H1 (cell line): ENCODE measurements at regions of chr3 and their contacts with region 1.

Region 1: DNA sequence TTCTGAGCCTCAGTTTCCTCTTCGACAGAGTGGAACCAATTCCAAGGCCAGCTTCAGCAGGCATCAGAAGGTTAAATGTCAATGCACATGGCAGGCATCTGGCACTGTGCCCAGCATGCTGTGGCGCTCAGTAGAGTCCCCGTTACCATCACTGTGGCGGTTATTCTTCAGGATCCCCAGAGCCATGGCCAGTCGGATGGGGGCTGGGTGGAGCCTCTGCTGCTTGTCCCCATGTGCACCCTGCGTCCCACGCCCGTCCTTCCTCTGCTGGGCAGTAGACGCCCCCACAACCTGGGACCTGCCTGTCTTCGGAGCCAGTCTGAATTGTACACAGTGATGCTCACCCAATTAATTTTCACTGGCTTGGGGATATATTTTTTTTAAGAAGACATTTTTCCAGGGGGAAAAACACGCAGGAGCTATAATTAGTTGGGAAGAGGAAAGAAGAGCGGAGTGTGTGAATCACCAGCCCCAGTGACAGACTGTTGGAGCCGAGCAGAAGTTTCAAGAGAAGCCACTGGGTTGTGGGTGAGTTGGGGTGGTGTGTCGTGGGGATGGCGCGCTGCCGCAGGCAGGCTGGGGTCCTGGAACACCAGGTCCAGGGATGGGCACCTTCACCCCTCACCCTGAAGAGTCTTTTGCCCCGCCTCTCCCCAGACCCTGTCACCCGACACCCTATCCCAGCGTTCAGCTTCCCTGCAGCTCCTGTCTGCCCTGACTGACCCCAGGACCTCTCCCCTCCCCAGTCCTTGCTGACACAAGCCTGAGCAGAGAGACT is 26.8 kb upstream of the RPL29 start:
- DNase-seq: no peak
- H3K4me3 ChIP-seq: no peak overlapping the region
- H3K27ac ChIP-seq: no peak overlapping the region
- H3K4me1 ChIP-seq: peaks cover 0 to 5% (median 2%) of the 10 kb centered on the region in 4 experiments; a peak in 3 of 7 replicates
- H3K27me3 ChIP-seq: no peaks in the 10 kb centered on the region
- CTCF ChIP-seq: no peak
- EP300 ChIP-seq: no peak
- POLR2A ChIP-seq: no peak
- RAD21 ChIP-seq: no peak

Region 2: GRCh38 chr3:52046186-52046913 is 23.8 kb after region 1 on chr3:
- CTCF ChIA-PET with region 1: interaction called, 984 read pairs
- POLR2A ChIA-PET with region 1: interaction called, 4 read pairs
- DNase-seq: no peak
- H3K4me3 ChIP-seq: no peak overlapping the region
- H3K27ac ChIP-seq: no peak overlapping the region
- H3K4me1 ChIP-seq: peaks cover 0 to 8% (median 3%) of the 10 kb centered on the region in 4 experiments; a peak in 5 of 7 replicates
- H3K27me3 ChIP-seq: no peaks in the 10 kb centered on the region
- CTCF ChIP-seq: no peak
- EP300 ChIP-seq: no peak
- POLR2A ChIP-seq: no peak
- RAD21 ChIP-seq: no peak